AG04449 (cell line): ENCODE measurements at regions of chrX and their contacts with region 1.

Region 1: GRCh38 chrX:34918856-34919255 is 23.7 kb upstream of the FAM47B start:
- DNase-seq: no peak
- H3K4me3 ChIP-seq: no peak overlapping the region
- CTCF ChIP-seq: peak; percentile 32

Region 2: DNA sequence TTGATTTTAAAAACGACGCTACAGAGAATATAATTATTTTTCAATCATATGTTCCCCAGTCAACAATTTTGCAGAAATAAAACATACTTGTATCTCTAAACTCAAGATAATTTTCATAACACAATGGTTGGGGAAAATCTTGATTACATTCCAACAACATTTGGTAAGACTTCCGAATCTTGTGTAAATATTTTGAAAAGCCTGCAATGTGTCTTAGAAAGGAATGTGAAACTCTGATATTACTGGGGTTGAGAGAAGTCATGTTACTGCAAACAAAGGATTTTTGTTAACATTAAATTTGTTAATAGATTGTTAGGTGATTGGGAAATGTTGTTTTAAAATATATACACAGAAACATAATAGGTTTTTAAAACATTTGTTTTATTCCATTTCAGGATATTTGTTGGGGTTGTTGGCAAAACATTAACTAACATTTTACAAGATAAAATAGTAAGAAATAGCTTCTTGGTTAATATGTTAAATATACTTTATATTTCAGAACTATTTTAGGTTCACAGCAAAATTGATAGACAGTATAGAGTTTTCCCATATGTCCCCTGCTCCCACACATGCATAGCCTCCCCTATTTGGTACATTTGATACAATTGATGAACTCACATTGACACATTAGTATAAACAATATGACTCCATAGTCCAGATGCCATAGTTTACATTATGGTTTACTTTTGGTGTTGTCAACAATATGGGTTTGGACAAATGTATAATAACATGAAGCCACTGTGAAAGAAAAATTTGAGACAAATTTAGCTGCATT is 568.1 kb before region 1 on chrX:
- CTCF ChIA-PET with region 1: no interaction called
- POLR2A ChIA-PET with region 1: no interaction called
- DNase-seq: no peak
- H3K4me3 ChIP-seq: no peak overlapping the region
- CTCF ChIP-seq: no peak

Region 3: GRCh38 chrX:34493086-34493485 is 425.8 kb before region 1 on chrX:
- CTCF ChIA-PET with region 1: no interaction called
- POLR2A ChIA-PET with region 1: no interaction called
- DNase-seq: no peak
- H3K4me3 ChIP-seq: no peak overlapping the region
- CTCF ChIP-seq: no peak

Region 4: GRCh38 chrX:34638116-34638515 is 280.7 kb before region 1 on chrX:
- CTCF ChIA-PET with region 1: interaction called, 11 read pairs
- POLR2A ChIA-PET with region 1: no interaction called
- DNase-seq: no peak
- H3K4me3 ChIP-seq: no peak overlapping the region
- CTCF ChIP-seq: peak; percentile 12

Region 5: DNA sequence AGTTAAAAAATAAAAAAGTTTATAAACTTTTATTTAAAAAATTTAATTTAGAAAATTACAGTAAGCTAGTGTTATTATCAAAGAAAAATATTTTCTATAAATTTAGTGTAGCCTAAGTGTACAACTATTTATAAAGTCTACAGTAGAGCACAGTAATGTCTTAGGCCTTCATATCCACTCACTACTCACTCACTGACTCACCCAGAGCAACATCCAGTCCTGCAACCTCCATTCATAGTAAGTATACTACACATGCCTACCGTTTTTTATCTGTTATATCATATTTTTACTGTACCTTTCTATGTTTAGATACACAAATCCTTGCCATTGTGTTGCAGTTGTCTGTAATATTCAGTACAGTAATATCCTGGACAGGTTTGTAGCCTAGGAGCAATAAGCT is 105.2 kb before region 1 on chrX:
- CTCF ChIA-PET with region 1: no interaction called
- POLR2A ChIA-PET with region 1: no interaction called
- DNase-seq: no peak
- H3K4me3 ChIP-seq: no peak overlapping the region
- CTCF ChIP-seq: no peak

Region 6: GRCh38 chrX:34903316-34903715 is 15.5 kb before region 1 on chrX:
- CTCF ChIA-PET with region 1: interaction called, 10 read pairs
- POLR2A ChIA-PET with region 1: no interaction called
- DNase-seq: no peak
- H3K4me3 ChIP-seq: no peak overlapping the region
- CTCF ChIP-seq: no peak

Region 7: DNA sequence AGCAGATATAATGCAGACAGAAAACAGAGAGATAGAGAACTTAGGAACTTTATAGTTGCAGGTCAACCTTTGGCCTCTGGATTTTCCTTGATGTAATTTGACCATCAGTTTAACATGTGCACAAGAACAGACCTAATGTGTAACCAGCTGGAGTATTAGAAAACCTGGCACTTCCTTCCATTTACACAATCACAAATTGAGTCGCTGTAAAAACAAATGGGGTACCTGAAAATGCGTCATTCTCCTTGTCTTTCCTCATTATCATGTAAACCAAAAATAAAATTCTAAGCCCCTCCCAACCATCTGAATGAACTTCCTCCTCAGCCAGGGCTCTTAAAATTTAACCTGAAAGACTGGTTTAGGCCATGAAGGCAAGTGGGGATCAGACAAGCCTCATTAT is 520.8 kb after region 1 on chrX:
- CTCF ChIA-PET with region 1: no interaction called
- POLR2A ChIA-PET with region 1: no interaction called
- DNase-seq: no peak
- H3K4me3 ChIP-seq: no peak overlapping the region
- CTCF ChIP-seq: no peak